Right ventricle myocardium inferior (tissue), 1 donor: ENCODE measurements at regions of chr12 and their contacts with region 1.

Region 1: DNA sequence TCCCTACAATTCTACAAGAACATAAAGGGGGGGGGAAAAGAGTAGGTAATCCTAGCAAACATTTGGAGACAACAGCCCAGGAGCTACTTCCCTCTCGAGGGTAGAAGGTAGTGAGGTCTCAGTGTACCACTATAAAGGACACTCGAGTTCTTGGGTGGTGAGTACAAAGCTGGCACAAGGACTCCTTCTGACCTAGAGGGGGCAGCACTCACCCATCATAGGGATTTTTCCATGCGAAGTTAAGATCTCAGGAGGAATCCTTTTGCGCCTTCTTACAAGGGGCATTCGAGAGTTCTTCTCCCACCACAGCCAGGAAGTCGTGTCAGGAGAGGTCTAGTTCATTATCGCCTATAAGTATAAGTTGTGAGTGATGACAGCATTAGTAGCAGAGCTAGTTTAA is 200.2 kb upstream of the RBM19 start:
- DNase-seq: no peak
- ATAC-seq: peak; percentile 57

Region 2: DNA sequence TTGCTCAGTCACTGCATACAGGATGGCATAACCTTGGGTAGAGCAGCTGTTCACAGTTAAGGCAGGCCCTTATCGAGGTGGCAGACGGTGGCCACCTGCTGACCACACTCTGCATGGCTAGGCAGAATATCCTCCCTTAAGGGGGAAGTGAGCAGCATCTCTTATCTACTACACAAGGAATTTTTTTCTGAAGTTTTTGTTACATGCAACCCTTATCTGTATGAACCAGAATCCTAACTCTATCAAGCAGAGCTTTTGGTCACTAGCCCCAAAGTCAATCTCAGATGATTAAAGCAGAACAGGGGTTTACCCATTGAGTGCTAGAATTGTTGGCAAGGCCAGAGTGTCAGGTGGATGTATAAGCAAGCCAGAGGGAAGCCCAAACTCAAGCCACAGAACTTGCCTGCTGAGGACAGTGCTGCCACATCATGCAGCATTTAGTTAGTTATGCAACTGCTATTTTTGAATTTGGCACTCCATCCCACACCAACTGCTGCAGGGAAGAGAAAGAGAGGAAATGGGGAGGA is 46.8 kb after region 1 on chr12:
- intact Hi-C with region 1: loop called (anchors 5 kb)
- DNase-seq: no peak
- ATAC-seq: peak; percentile 88

Region 3: DNA sequence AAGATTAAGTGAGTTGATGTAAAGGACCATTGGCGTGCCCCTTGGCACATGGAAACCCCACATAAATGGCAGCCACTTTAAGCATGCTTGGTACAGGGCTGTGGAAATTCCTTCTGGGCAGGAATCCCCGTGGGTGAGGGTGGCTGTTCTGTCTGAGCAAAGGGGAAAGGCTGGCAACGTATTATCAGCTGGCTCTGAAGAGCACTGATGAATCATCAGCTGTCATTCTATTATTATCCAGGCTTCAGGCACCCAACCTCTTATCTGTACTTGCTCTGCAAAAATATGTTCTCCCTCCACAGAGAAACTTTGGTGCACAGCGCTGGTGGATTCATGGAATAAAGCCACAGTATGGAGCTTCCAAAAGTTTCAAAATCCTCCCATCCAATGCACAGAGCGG is 72.4 kb after region 1 on chr12:
- intact Hi-C with region 1: loop called (anchors 5 kb)
- DNase-seq: no peak
- ATAC-seq: peak; percentile 95

Region 4: GRCh38 chr12:114508529-114509129 is 342.3 kb after region 1 on chr12:
- intact Hi-C with region 1: loop called (anchors 1 kb)
- DNase-seq: no peak
- ATAC-seq: peak; percentile 54